Right cardiac atrium (tissue), 5 donors: ENCODE measurements at regions of chr18 and their contacts with region 1.

Region 1: DNA sequence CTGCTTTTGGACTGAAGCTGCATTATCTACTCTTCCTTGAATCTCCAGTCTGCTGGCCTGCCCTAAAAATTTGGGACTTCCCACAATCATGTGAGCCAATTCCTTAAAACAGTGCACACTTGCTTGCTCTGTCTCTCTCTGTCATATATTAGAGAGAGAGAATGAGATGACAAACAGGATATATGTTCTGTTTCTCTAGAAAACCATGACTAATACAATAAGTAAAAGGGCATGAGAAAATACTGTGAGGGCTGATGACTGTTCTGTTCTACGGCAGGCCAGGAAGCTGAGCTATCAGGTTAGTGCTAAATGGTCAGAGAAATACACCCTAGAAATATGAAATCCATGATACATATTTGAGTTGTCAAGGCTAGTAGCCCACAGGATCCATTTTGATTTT is 1896.8 kb upstream of the CELF4 start:
- DNase-seq: no peak
- ATAC-seq: no peak
- H3K4me3 ChIP-seq: no peak overlapping the region
- H3K27ac ChIP-seq: no peak overlapping the region
- H3K4me1 ChIP-seq: no peaks in the 10 kb centered on the region
- H3K27me3 ChIP-seq: no peaks in the 10 kb centered on the region

Region 2: GRCh38 chr18:39523281-39523680 is 60.8 kb after region 1 on chr18:
- intact Hi-C with region 1: no loop called
- DNase-seq: no peak
- ATAC-seq: no peak
- H3K4me3 ChIP-seq: no peak overlapping the region
- H3K27ac ChIP-seq: no peak overlapping the region
- H3K4me1 ChIP-seq: no peaks in the 10 kb centered on the region
- H3K27me3 ChIP-seq: no peaks in the 10 kb centered on the region

Region 3: GRCh38 chr18:39561126-39561525 is 98.7 kb after region 1 on chr18:
- intact Hi-C with region 1: no loop called
- DNase-seq: no peak
- ATAC-seq: peak in 1 of 2 donors; percentile 49
- H3K4me3 ChIP-seq: no peak overlapping the region
- H3K27ac ChIP-seq: no peak overlapping the region
- H3K4me1 ChIP-seq: no peaks in the 10 kb centered on the region
- H3K27me3 ChIP-seq: no peaks in the 10 kb centered on the region

Region 4: GRCh38 chr18:40109252-40110049 is 647.0 kb after region 1 on chr18:
- intact Hi-C with region 1: loop called in 1 of 4 experiments (anchors 10 kb)
- DNase-seq: no peak
- ATAC-seq: no peak
- H3K4me3 ChIP-seq: no peak overlapping the region
- H3K27ac ChIP-seq: no peak overlapping the region
- H3K4me1 ChIP-seq: no peaks in the 10 kb centered on the region
- H3K27me3 ChIP-seq: no peaks in the 10 kb centered on the region